HepG2 (cell line): ENCODE measurements at regions of chr6 and their contacts with region 1.

Region 1: GRCh38 chr6:158014505-158015187 is 33.0 kb downstream of the SYNJ2 start:
- DNase-seq: peak; percentile 88
- ATAC-seq: no peak; the same call in 2 of the 3 replicates
- H3K4me3 ChIP-seq: 0 out of 6 replicates have a peak overlapping the region, but pooled peaks of 1 of the 3 experiments have one; percentile 3
- H3K27ac ChIP-seq: peak overlapping the region; percentile 99
- H3K4me1 ChIP-seq: peaks cover 73% of the 10 kb centered on the region
- H3K27me3 ChIP-seq: no peaks in the 10 kb centered on the region
- CTCF ChIP-seq: no peak
- EP300 ChIP-seq: peak; percentile 3 to 91; a peak in 2 of 4 replicates
- POLR2A ChIP-seq: peak; percentile 40; a peak in 2 of 4 replicates
- RAD21 ChIP-seq: no peak; the same call in 1 of the 2 replicates

Region 2: GRCh38 chr6:157994126-157994795 is 20.4 kb before region 1 on chr6:
- CTCF ChIA-PET with region 1: no interaction called
- POLR2A ChIA-PET with region 1: interaction called, 345 read pairs
- in situ Hi-C with region 1: no loop called
- intact Hi-C with region 1: no loop called
- DNase-seq: peak; percentile 69
- ATAC-seq: peak; percentile 8; the same call in 2 of the 3 replicates
- H3K4me3 ChIP-seq: no peak overlapping the region
- H3K27ac ChIP-seq: peak overlapping the region; percentile 49
- H3K4me1 ChIP-seq: peaks cover 96% of the 10 kb centered on the region
- H3K27me3 ChIP-seq: no peaks in the 10 kb centered on the region
- CTCF ChIP-seq: no peak
- EP300 ChIP-seq: no peak
- POLR2A ChIP-seq: no peak
- RAD21 ChIP-seq: no peak

Region 3: GRCh38 chr6:158002951-158003853 is 11.4 kb before region 1 on chr6:
- CTCF ChIA-PET with region 1: no interaction called
- POLR2A ChIA-PET with region 1: interaction called, 23 read pairs
- in situ Hi-C with region 1: no loop called
- intact Hi-C with region 1: no loop called
- DNase-seq: no peak
- ATAC-seq: no peak
- H3K4me3 ChIP-seq: no peak overlapping the region
- H3K27ac ChIP-seq: peak overlapping the region; percentile 28
- H3K4me1 ChIP-seq: peaks cover 99% of the 10 kb centered on the region
- H3K27me3 ChIP-seq: no peaks in the 10 kb centered on the region
- CTCF ChIP-seq: no peak
- EP300 ChIP-seq: no peak
- POLR2A ChIP-seq: no peak
- RAD21 ChIP-seq: no peak

Region 4: GRCh38 chr6:158031381-158032353 is 17.0 kb after region 1 on chr6:
- CTCF ChIA-PET with region 1: no interaction called
- POLR2A ChIA-PET with region 1: interaction called, 75 read pairs
- in situ Hi-C with region 1: no loop called
- intact Hi-C with region 1: loop called (anchors 1 kb)
- DNase-seq: no peak
- ATAC-seq: no peak
- H3K4me3 ChIP-seq: no peak overlapping the region
- H3K27ac ChIP-seq: peak overlapping the region; percentile 25
- H3K4me1 ChIP-seq: peaks cover 66% of the 10 kb centered on the region
- H3K27me3 ChIP-seq: no peaks in the 10 kb centered on the region
- CTCF ChIP-seq: no peak
- EP300 ChIP-seq: no peak
- POLR2A ChIP-seq: peak in 1 of 2 experiments; percentile 29; a peak in 2 of 4 replicates
- RAD21 ChIP-seq: no peak

Region 5: DNA sequence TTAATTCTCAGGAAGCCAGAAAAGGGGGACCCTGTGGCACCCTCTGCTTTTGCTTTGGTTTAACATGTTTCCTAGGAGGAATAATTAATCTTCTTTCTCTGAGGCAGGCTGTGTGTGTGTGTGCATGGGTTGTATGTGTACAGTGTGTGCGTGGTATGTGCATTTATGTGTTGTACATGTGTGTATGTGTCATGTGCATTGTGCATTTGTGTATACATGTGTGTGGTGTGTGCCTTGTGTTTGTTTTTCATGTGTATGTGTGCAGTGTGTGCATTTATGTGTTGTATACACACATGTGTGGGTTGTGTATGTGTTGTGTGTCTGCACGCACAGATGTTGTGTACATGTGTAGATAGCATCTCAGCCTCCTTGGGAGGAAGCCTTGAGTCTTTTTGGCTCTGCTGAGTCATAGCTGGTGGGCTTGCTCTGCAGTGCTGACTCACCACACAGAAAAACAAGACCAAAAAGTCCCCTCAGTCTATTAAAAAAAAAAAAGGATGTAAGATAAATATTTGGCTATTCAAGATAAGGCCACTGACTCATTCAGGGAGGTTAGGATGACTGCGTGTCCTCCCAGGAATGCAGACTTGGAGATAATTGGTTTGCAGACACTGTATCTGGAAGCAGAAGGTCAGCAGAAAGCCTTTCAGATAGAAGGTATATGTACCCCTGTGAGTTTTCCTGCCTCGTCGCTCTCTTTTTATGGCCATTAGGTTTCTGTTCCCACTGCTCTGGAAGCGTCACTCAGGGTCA is 25.6 kb after region 1 on chr6:
- CTCF ChIA-PET with region 1: no interaction called
- POLR2A ChIA-PET with region 1: interaction called, 75 read pairs
- in situ Hi-C with region 1: no loop called
- intact Hi-C with region 1: no loop called
- DNase-seq: peak; percentile 99
- ATAC-seq: peak; percentile 84
- H3K4me3 ChIP-seq: peak overlapping the region in 2 of 3 experiments; percentile 7 to 51; a peak in 2 of 6 replicates
- H3K27ac ChIP-seq: peak overlapping the region; percentile 92
- H3K4me1 ChIP-seq: peaks cover 87% of the 10 kb centered on the region
- H3K27me3 ChIP-seq: no peaks in the 10 kb centered on the region
- CTCF ChIP-seq: no peak
- EP300 ChIP-seq: peak; percentile 59 to 97; a peak in 3 of 4 replicates
- POLR2A ChIP-seq: peak; percentile 35 to 77; a peak in 3 of 4 replicates
- RAD21 ChIP-seq: no peak

Region 6: GRCh38 chr6:158047127-158047518 is 32.5 kb after region 1 on chr6:
- CTCF ChIA-PET with region 1: no interaction called
- POLR2A ChIA-PET with region 1: interaction called, 65 read pairs
- in situ Hi-C with region 1: no loop called
- intact Hi-C with region 1: loop called (anchors 1 kb)
- DNase-seq: no peak
- ATAC-seq: no peak
- H3K4me3 ChIP-seq: no peak overlapping the region
- H3K27ac ChIP-seq: peak overlapping the region; percentile 5
- H3K4me1 ChIP-seq: peaks cover 79% of the 10 kb centered on the region
- H3K27me3 ChIP-seq: no peaks in the 10 kb centered on the region
- CTCF ChIP-seq: no peak
- EP300 ChIP-seq: no peak
- POLR2A ChIP-seq: no peak
- RAD21 ChIP-seq: no peak

Region 7: GRCh38 chr6:158122048-158122447 is 107.4 kb after region 1 on chr6:
- CTCF ChIA-PET with region 1: no interaction called
- POLR2A ChIA-PET with region 1: no interaction called
- in situ Hi-C with region 1: no loop called
- intact Hi-C with region 1: no loop called
- DNase-seq: peak; percentile 56
- ATAC-seq: peak; percentile 64
- H3K4me3 ChIP-seq: no peak overlapping the region
- H3K27ac ChIP-seq: no peak overlapping the region
- H3K4me1 ChIP-seq: peaks cover 10% of the 10 kb centered on the region
- H3K27me3 ChIP-seq: no peaks in the 10 kb centered on the region
- CTCF ChIP-seq: no peak
- EP300 ChIP-seq: no peak
- POLR2A ChIP-seq: no peak
- RAD21 ChIP-seq: no peak